ENCODE measurements at regions of chr10 and their contacts with region 1.

Region 1: DNA sequence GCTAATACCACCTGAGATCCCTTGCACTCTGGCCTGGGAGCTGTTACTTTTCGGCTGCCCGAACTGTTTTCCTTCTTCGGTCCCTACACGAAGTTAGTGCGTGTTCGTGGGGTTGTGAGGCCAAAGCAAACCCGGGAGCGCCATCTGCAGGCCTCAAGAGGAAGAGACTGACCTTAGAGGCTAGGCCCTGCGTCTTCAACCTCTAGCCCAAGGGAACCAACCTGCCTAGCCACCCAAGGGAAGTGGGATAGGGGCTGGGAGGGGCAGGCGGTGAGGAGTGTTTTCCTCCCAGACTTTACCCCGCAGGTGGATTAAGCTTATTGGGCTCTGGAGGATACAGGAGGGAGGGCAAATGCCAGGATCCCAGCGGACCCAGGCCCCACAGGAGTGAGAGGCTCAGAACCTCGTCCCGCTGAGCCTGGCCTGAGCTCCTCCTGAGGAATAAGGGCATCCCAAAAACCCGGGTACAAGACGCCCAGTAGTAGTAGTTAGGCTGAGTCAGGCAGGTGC is 1.7 kb upstream of the PAX2 start:
- H3K4me3 ChIP-seq: peak overlapping the region; percentile 3; the same call in 1 of the 2 replicates
- H3K27ac ChIP-seq: peak overlapping the region; percentile 67; the same call in 1 of the 2 replicates
- H3K4me1 ChIP-seq: peaks cover 2% of the 10 kb centered on the region; the same call in 1 of the 2 replicates
- CTCF ChIP-seq: peak; percentile 83

Region 2: DNA sequence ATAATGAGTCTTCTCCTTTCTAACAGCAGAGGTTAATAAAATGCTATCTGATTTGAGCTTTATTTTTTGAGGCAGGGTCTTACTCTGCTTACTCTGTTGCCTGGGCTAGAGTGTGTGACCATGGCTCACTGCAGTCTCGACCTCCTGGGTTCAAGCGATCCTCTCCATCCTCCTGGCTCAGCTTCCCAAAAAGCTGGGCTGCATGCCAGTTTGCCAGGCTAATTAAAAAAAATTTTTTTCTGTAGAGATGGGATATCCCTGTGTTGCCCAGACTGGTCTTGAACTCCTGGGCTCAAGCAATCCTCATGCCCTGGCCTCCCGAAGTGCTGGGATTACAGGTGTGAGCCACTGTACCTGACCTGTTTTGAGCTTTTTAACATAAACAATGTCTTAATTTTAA is 339.9 kb before region 1 on chr10:
- CTCF ChIA-PET with region 1: no interaction called
- POLR2A ChIA-PET with region 1: no interaction called
- H3K4me3 ChIP-seq: no peak overlapping the region
- H3K27ac ChIP-seq: no peak overlapping the region
- H3K4me1 ChIP-seq: no peaks in the 10 kb centered on the region
- CTCF ChIP-seq: no peak

Region 3: GRCh38 chr10:100562008-100562711 is 181.5 kb before region 1 on chr10:
- CTCF ChIA-PET with region 1: interaction called, 144 read pairs
- POLR2A ChIA-PET with region 1: interaction called, 5 read pairs
- H3K4me3 ChIP-seq: no peak overlapping the region
- H3K27ac ChIP-seq: no peak overlapping the region
- H3K4me1 ChIP-seq: no peaks in the 10 kb centered on the region
- CTCF ChIP-seq: peak; percentile 96

Region 4: DNA sequence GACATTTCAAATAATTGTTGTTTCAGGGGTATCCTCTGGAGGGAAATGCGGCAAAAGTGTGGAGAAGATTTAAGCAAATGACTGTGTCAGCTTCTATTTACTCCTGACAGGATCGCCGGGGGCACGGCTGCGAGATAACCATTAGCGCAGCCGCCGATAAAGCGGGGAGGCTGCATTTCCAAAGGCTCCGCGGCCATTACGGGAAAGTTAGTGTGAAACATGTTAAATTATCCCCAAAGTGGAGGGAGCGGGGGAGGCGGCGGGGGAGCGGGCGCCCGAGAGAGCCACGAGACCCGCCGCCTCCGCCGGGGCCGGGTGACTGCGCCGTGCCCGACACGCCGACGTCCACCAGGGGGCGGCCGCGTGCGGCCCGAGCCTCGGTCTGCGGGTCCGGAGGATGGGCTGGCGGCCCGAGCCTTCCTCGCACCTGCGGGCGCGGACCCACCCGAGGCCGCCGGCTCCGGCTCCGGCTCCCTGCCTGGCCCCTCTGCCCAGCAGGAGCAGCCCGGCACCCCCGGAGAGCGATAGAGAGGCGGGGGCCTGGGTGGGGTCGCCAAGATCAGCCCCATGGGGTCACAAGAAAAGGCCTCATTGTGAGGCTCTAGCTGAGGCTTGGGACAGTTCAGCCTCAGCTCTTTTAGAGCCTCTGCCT is 72.7 kb before region 1 on chr10:
- CTCF ChIA-PET with region 1: interaction called, 30 read pairs
- POLR2A ChIA-PET with region 1: no interaction called
- H3K4me3 ChIP-seq: no peak overlapping the region; the same call in 1 of the 2 replicates
- H3K27ac ChIP-seq: no peak overlapping the region
- H3K4me1 ChIP-seq: no peaks in the 10 kb centered on the region
- CTCF ChIP-seq: no peak

Region 5: DNA sequence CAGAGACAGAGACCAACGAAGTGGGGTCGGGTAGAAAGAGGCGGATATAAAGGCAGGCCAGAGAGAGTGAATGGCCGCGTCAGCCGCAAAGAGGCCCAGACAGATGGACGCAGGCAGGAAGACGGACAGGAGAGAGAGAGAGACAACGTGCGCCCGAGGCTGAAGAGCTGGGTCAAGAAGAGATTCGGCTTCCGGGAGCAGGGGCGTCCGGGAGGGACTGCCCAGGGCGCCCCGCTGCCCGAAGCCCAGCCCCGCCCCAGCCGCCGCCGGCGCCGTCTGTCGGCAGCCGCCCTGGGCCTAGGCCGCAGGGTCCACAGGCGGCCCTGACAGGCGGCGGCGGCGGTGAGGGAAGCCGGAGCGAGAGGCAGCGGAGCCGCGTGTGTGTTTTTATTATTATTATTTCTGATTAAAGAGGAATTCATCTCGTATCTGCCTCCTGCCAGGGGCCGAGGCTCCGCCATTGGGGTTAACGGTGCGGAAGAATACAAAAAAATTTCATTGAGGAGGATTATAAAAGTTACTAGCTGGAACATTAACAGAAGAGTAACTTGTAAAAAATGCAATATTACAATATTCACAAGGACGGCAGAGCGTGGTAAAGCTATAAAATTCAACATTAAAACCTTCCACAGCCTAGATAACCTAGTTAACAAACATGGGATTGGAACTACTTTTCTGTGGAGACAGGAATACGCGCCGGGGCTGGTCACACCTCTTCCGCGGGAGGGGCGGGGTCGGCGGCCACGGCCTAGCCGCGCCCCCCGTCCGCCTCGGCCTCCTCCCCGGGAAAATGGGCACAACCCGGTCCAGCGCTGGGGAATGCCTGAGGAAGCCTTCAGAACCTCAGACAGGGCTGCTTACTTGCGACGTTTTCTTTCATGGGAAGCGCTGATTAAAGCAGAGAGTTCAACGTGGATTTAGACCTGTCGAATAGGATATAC is 28.0 kb before region 1 on chr10:
- CTCF ChIA-PET with region 1: interaction called, 13 read pairs
- POLR2A ChIA-PET with region 1: no interaction called
- H3K4me3 ChIP-seq: no peak overlapping the region
- H3K27ac ChIP-seq: no peak overlapping the region
- H3K4me1 ChIP-seq: no peaks in the 10 kb centered on the region
- CTCF ChIP-seq: no peak

Region 6: DNA sequence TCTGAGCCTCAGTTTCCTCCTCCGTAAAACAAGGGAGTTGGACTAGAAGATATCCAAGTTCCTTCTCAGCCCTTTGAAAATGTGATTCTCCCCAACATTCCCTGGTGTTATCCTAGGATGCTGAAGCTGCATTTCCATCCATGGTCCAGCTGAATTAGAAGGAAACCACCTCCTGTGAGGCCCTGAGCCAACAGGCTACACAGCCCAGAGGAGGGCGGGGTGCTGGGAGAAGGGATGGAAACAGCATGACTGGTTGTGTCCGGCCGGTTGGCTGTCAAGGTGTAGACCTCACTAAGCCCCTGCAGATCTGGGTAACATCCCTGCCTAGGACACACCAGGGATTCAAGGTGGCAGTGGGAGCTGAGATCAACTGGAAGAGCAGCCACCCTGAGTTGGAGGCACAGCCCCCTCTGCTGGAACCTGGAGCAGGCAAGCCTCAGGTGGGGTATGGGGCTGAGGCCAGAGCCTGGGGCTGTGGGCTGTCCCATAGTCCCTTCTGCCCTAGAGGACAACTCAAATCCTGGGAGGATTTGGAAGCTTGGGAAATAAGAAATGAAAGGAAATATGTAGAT is 73.7 kb after region 1 on chr10:
- CTCF ChIA-PET with region 1: interaction called, 15 read pairs
- POLR2A ChIA-PET with region 1: no interaction called
- H3K4me3 ChIP-seq: no peak overlapping the region
- H3K27ac ChIP-seq: no peak overlapping the region
- H3K4me1 ChIP-seq: no peaks in the 10 kb centered on the region
- CTCF ChIP-seq: no peak

Region 7: DNA sequence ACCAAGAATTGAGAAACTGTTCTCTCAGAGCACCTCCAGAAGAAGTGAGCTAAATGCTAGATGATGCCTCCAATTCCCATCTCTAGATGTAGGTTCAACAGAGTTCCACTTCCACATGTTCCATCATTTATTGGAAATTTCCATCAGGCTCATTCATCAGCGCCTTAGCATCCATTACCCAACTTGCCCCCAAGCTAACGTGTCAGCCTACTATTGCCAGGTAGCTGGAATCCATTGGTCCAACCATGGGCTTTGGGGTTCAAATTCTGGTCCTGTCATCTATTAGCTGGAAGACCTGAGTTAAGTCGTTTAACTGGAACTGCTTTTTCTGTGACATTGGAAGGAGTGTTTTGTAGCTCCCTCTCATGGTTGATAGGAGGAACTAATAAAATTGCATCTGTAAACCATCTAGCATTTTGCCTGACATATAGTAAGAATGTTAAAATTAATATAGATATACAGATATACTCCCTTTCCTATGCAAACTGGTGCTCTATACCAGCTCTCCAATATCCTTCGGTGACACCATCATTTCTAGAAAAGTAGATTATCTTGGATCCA is 145.2 kb after region 1 on chr10:
- CTCF ChIA-PET with region 1: interaction called, 11 read pairs
- POLR2A ChIA-PET with region 1: no interaction called
- H3K4me3 ChIP-seq: no peak overlapping the region
- H3K27ac ChIP-seq: no peak overlapping the region
- H3K4me1 ChIP-seq: no peaks in the 10 kb centered on the region
- CTCF ChIP-seq: no peak

Region 8: DNA sequence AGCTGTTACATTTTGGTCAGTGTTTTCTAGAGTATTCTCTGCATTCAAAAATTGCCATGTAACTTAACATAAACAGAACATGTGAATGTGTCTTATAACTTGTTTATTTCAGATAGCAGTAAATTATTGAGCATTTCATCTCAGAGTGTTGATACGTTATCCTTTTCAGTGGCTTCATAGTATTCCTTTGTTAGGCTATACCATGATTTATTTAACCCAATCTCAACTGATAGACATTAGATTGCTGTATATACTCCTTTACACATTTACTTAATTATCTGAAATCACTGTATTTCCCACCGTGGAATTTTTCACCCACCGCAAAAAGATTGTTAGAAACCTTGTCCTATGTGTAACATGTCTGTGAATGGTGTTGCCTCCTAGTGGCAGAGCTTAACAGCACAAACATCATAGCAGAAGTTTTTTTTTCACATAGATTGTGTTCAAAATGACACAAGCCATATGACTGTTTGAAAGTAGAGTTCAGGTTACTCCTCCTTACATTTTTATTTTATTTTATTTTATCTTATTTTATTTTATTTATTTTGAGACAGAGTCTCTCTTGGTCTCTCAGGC is 190.5 kb after region 1 on chr10:
- CTCF ChIA-PET with region 1: no interaction called
- POLR2A ChIA-PET with region 1: no interaction called
- H3K4me3 ChIP-seq: no peak overlapping the region
- H3K27ac ChIP-seq: no peak overlapping the region
- H3K4me1 ChIP-seq: no peaks in the 10 kb centered on the region
- CTCF ChIP-seq: no peak